CD4-positive, alpha-beta memory T cell (primary cell): ENCODE measurements at regions of chr3 and their contacts with region 1.

Region 1: DNA sequence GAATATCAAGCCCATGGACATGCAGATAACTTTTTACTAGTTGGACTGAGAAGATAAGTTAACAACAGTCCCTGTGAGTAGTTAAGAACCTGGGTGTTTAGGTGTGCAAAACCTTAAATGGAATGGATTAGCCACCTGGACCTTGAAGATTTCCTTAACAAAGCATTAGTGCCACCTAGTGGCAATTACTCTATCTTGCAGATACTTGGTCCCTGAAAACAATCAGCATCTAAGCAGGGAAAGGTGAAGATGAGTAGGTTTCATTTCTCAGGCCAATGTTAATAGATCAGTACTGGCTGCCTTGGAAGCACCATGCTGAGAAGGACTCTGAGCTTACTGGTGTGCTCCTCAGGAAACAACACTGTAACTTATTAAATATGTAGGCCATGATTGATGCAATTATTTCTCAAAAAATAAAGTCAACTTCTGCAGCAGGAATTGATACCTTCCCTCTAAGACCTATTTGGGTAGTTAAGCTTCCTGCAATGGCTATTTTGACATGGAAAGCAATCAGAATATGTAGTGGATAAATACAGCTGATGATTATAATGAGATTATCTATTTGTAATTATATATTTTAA is 329.4 kb downstream of the TBC1D5 start:
- DNase-seq: peak in 4 of 5 donors; percentile 44 to 53 (median 49)
- H3K4me3 ChIP-seq: no peak overlapping the region
- H3K4me3 Mint-ChIP-seq: no peak overlapping the region
- H3K27ac ChIP-seq: no peak overlapping the region
- H3K27ac Mint-ChIP-seq: peak overlapping the region in 1 of 7 donors; percentile 31
- H3K4me1 ChIP-seq: no peaks in the 10 kb centered on the region
- H3K4me1 Mint-ChIP-seq: peaks cover 0 to 8% (median 2%) of the 10 kb centered on the region in 4 donors
- H3K27me3 ChIP-seq: no peaks in the 10 kb centered on the region
- H3K27me3 Mint-ChIP-seq: no peaks in the 10 kb centered on the region

Region 2: DNA sequence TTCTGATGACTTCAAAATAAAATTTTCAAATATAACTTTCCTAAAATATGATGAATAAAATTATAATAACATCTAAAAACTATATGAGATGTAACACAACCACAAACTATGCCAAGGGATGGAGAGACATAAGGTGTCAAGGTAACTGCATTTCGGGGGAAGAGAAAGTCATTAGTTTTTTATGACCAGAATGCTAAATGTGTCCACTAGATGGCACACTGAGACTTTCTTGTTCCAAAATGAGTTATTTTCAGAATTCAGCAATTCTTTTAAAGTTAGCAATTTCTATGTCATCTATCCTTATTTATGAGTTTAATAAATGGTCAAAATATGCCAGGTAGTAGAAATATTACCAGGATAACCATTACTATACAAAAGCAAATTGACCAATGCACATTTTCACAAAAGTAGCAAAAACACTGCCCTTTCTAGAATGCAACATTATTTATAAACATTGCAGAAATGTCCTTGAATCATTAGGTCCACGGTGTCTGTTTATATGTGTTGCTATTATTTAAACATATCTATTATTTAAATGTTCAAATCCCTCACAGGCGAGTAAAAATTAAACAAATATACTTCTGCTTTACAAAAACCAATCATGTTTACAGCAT is 154.1 kb before region 1 on chr3:
- CTCF ChIA-PET with region 1: interaction called, 13 read pairs
- POLR2A ChIA-PET with region 1: no interaction called
- intact Hi-C with region 1: loop called (anchors 1 kb)
- DNase-seq: peak in 4 of 5 donors; percentile 31 to 45 (median 39)
- H3K4me3 ChIP-seq: no peak overlapping the region
- H3K4me3 Mint-ChIP-seq: no peak overlapping the region
- H3K27ac ChIP-seq: no peak overlapping the region
- H3K27ac Mint-ChIP-seq: no peak overlapping the region
- H3K4me1 ChIP-seq: no peaks in the 10 kb centered on the region
- H3K4me1 Mint-ChIP-seq: peaks cover 0 to 1% (median 0%) of the 10 kb centered on the region in 4 donors
- H3K27me3 ChIP-seq: no peaks in the 10 kb centered on the region
- H3K27me3 Mint-ChIP-seq: no peaks in the 10 kb centered on the region

Region 3: DNA sequence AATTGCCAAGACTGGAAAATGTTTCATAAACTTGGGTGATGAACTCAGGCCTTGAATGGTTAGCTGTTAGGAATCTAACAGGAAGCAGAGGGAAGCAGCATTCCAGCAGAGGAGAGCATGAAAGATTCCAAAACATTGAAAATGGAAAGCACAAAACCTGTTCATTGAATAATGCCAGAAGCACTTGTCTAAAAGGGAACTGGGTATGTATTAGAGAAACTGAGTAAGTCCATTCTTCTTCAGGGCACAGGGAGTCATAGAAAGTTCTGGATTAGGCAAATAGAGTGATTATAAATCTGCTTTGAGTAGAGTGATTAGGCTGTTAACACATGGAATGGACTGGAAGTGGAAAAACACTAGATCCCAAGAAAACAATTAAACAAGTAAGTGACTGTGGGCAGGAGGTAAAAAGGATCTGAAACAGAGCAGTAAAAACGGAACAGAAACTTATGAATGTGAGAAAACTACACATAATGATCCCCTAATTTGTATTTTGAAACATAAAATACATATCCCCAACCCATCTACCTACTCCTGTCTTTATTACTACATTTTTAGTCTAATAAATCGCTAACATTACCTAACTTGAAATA is 14.0 kb before region 1 on chr3:
- CTCF ChIA-PET with region 1: interaction called, 22 read pairs
- POLR2A ChIA-PET with region 1: no interaction called
- intact Hi-C with region 1: no loop called
- DNase-seq: no peak
- H3K4me3 ChIP-seq: no peak overlapping the region
- H3K4me3 Mint-ChIP-seq: no peak overlapping the region
- H3K27ac ChIP-seq: no peak overlapping the region
- H3K27ac Mint-ChIP-seq: no peak overlapping the region
- H3K4me1 ChIP-seq: no peaks in the 10 kb centered on the region
- H3K4me1 Mint-ChIP-seq: no peaks in the 10 kb centered on the region
- H3K27me3 ChIP-seq: no peaks in the 10 kb centered on the region
- H3K27me3 Mint-ChIP-seq: no peaks in the 10 kb centered on the region

Region 4: GRCh38 chr3:17423786-17424536 is 10.9 kb after region 1 on chr3:
- CTCF ChIA-PET with region 1: interaction called, 16 read pairs
- POLR2A ChIA-PET with region 1: no interaction called
- intact Hi-C with region 1: no loop called
- DNase-seq: no peak
- H3K4me3 ChIP-seq: no peak overlapping the region
- H3K4me3 Mint-ChIP-seq: no peak overlapping the region
- H3K27ac ChIP-seq: no peak overlapping the region
- H3K27ac Mint-ChIP-seq: no peak overlapping the region
- H3K4me1 ChIP-seq: no peaks in the 10 kb centered on the region
- H3K4me1 Mint-ChIP-seq: no peaks in the 10 kb centered on the region
- H3K27me3 ChIP-seq: no peaks in the 10 kb centered on the region
- H3K27me3 Mint-ChIP-seq: no peaks in the 10 kb centered on the region